ENCODE measurements at regions of chr7 and their contacts with region 1.

Region 1: DNA sequence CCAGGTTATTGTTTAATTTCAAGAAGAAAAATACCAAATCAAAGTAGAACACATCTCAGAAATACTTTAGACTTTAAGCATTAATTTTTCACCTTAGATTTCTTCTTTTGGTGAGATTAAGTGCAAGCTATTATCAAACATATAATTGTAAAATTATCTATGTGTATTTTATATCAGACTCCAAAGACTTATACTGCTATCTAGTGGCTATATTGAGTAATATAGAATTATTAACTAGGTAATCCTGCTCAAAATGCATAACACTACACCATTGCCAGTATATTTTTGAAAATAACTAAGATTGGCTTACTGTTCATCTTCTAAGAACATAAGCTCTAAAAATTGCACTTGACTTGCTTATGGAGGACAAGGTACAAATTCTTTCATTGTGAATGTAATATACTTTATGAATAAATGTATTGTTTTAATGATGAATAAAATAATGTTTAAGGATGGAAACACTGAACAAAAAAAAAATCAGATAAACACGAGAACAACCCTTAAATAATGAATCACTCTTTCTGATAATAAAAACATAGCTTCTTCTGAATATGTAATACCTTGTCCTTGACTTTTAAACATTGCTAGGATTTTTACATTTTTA is 86.7 kb upstream of the GNAI1 start:
- DNase-seq: peak; percentile 34
- ATAC-seq: peak; percentile 82
- H3K4me3 ChIP-seq: no peak overlapping the region
- H3K27ac ChIP-seq: no peak overlapping the region
- H3K4me1 ChIP-seq: no peaks in the 10 kb centered on the region
- H3K27me3 ChIP-seq: no peaks in the 10 kb centered on the region
- CTCF ChIP-seq: peak; percentile 65
- POLR2A ChIP-seq: no peak
- RAD21 ChIP-seq: peak; percentile 69

Region 2: GRCh38 chr7:78939669-78940068 is 1108.3 kb before region 1 on chr7:
- CTCF ChIA-PET with region 1: no interaction called
- POLR2A ChIA-PET with region 1: no interaction called
- dilution Hi-C with region 1: no loop called
- in situ Hi-C with region 1: loop called (anchors 25 kb)
- intact Hi-C with region 1: no loop called
- DNase-seq: peak; percentile 78
- ATAC-seq: peak; percentile 75
- H3K4me3 ChIP-seq: no peak overlapping the region
- H3K27ac ChIP-seq: no peak overlapping the region
- H3K4me1 ChIP-seq: no peaks in the 10 kb centered on the region
- H3K27me3 ChIP-seq: no peaks in the 10 kb centered on the region
- CTCF ChIP-seq: no peak
- POLR2A ChIP-seq: no peak
- RAD21 ChIP-seq: no peak

Region 3: GRCh38 chr7:79282063-79282694 is 765.8 kb before region 1 on chr7:
- CTCF ChIA-PET with region 1: no interaction called
- POLR2A ChIA-PET with region 1: no interaction called
- dilution Hi-C with region 1: no loop called
- in situ Hi-C with region 1: no loop called
- intact Hi-C with region 1: loop called (anchors 5 kb)
- DNase-seq: peak; percentile 86
- ATAC-seq: peak; percentile 38
- H3K4me3 ChIP-seq: no peak overlapping the region; the same call in 1 of the 2 replicates
- H3K27ac ChIP-seq: peak overlapping the region; percentile 54
- H3K4me1 ChIP-seq: peaks cover 19% of the 10 kb centered on the region
- H3K27me3 ChIP-seq: no peaks in the 10 kb centered on the region
- CTCF ChIP-seq: peak; percentile 58
- POLR2A ChIP-seq: no peak
- RAD21 ChIP-seq: peak; percentile 56

Region 4: DNA sequence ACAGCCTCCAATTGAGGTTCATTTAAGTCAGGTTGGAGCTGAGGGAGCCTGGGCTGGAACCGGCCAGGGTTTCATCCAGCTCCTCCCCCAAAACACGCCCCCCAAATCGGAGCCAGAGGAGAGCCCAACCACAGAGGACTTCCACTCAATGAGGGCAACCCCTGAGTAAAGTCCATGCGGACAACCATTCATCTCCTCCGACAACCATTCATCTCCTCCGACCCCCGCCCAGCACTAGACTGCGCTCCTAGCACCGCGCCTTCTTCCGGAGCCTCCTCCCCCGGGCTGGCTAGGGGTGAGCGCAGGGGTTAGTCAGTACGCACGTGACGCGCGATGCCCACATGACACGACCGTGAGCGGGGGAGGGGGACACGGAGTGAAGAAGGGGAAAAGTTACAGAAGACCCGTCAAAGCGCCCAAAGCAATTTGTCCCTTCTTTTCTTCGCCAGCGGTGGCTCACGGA is 595.9 kb before region 1 on chr7:
- CTCF ChIA-PET with region 1: no interaction called
- POLR2A ChIA-PET with region 1: interaction called, 3 read pairs
- dilution Hi-C with region 1: no loop called
- in situ Hi-C with region 1: loop called (anchors 25 kb)
- intact Hi-C with region 1: loop called (anchors 2 kb)
- DNase-seq: peak; percentile 82
- ATAC-seq: peak; percentile 69
- H3K4me3 ChIP-seq: peak overlapping the region; percentile 54
- H3K27ac ChIP-seq: peak overlapping the region; percentile 96
- H3K4me1 ChIP-seq: peaks cover 8% of the 10 kb centered on the region
- H3K27me3 ChIP-seq: no peaks in the 10 kb centered on the region
- CTCF ChIP-seq: no peak
- POLR2A ChIP-seq: peak; percentile 72
- RAD21 ChIP-seq: no peak

Region 5: GRCh38 chr7:80070391-80070790 is 22.4 kb after region 1 on chr7:
- CTCF ChIA-PET with region 1: no interaction called
- POLR2A ChIA-PET with region 1: no interaction called
- dilution Hi-C with region 1: no loop called
- in situ Hi-C with region 1: no loop called
- intact Hi-C with region 1: no loop called
- DNase-seq: peak; percentile 49
- ATAC-seq: peak; percentile 71
- H3K4me3 ChIP-seq: no peak overlapping the region; the same call in 1 of the 2 replicates
- H3K27ac ChIP-seq: peak overlapping the region; percentile 57; the same call in 1 of the 2 replicates
- H3K4me1 ChIP-seq: peaks cover 5% of the 10 kb centered on the region
- H3K27me3 ChIP-seq: no peaks in the 10 kb centered on the region
- CTCF ChIP-seq: no peak
- POLR2A ChIP-seq: no peak
- RAD21 ChIP-seq: no peak

Region 6: DNA sequence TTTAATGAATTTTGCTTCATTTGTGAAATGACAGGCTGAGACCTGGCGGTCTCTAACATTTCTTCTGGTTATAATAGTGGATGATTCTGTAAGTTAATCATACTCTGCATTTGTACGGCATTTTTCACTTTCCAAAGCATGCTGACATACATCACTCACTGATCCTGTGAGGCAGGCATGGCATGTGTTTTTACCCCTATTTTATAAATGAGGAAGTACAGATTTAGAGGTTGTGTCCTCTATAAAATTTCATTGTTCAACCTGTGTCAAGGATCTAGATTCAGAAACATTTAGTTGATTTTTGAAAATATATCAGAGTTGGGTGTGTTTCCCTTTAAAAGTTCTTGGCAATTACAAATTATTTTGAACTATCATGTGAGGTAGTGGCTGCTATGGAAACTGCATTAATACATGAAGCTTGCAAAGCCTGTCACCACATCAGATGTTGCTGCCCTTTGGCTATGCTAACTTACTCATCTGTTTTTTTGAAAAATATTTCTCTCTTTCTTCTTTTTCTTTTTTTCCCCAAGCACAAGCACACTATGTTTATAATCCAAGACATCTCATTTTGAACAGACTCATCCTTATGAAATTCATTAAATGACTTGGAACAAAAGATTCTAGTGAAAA is 259.4 kb after region 1 on chr7:
- CTCF ChIA-PET with region 1: no interaction called
- POLR2A ChIA-PET with region 1: no interaction called
- dilution Hi-C with region 1: no loop called
- in situ Hi-C with region 1: no loop called
- intact Hi-C with region 1: no loop called
- DNase-seq: peak; percentile 85
- ATAC-seq: peak; percentile 57
- H3K4me3 ChIP-seq: no peak overlapping the region
- H3K27ac ChIP-seq: no peak overlapping the region
- H3K4me1 ChIP-seq: peaks cover 2% of the 10 kb centered on the region
- H3K27me3 ChIP-seq: no peaks in the 10 kb centered on the region
- CTCF ChIP-seq: no peak
- POLR2A ChIP-seq: no peak
- RAD21 ChIP-seq: no peak